ENCODE measurements at regions of chr22 and their contacts with region 1.

Region 1: DNA sequence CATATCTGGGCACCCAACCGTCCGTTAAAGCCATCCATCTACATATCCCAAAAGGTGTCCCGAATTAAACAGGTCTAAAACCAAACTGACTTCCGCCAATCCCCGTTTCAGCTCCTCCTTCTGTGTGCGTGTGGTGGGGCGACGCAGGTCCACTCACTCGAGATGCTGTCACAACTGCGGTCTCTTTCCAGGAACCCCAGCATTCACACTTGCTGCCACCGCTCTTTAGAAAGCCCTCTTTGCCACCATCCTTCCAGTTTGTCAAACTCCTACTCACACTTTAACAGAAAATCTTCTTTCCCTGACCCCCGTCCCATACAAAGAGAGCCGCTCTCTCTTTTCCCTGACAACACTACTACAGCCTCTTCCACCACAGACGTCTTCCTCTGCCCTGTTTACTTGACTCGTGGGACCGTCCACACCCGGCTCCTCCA is 467 bp downstream of the ESS2 start:
- DNase-seq: no peak
- ATAC-seq: peak in 1 of 2 donors; percentile 8
- H3K4me3 ChIP-seq: peak overlapping the region; percentile 78 to 96 (median 89)
- H3K27ac ChIP-seq: peak overlapping the region; percentile 81 to 86 (median 84)
- H3K4me1 ChIP-seq: peaks cover 8% of the 10 kb centered on the region in 2 donors
- H3K27me3 ChIP-seq: peaks cover 9 to 12% (median 11%) of the 10 kb centered on the region in 3 donors
- CTCF ChIP-seq: no peak
- POLR2A ChIP-seq: no peak

Region 2: DNA sequence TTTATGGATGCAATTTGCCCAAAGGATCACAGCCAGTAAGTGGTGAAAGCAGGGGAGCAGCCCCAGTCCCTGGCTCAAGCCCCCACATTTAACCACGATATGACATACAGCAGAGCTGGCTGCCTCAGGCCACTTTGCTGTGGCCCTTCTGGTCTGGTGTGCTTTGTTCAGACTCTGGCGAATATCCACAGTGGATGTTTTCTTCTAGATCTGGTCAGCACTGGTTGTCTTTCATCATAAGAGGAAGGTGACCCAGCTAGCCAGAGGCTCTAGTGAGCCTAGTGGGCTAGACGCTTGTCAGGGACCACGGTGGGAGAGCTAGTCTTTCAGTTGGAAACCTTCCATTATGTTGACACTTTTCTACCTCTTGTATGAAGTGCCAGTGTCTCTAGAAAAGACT is 64.3 kb before region 1 on chr22:
- in situ Hi-C with region 1: no loop called
- intact Hi-C with region 1: no loop called
- DNase-seq: no peak
- ATAC-seq: no peak
- H3K4me3 ChIP-seq: no peak overlapping the region
- H3K27ac ChIP-seq: no peak overlapping the region
- H3K4me1 ChIP-seq: no peaks in the 10 kb centered on the region
- H3K27me3 ChIP-seq: no peaks in the 10 kb centered on the region
- CTCF ChIP-seq: no peak
- POLR2A ChIP-seq: no peak

Region 3: DNA sequence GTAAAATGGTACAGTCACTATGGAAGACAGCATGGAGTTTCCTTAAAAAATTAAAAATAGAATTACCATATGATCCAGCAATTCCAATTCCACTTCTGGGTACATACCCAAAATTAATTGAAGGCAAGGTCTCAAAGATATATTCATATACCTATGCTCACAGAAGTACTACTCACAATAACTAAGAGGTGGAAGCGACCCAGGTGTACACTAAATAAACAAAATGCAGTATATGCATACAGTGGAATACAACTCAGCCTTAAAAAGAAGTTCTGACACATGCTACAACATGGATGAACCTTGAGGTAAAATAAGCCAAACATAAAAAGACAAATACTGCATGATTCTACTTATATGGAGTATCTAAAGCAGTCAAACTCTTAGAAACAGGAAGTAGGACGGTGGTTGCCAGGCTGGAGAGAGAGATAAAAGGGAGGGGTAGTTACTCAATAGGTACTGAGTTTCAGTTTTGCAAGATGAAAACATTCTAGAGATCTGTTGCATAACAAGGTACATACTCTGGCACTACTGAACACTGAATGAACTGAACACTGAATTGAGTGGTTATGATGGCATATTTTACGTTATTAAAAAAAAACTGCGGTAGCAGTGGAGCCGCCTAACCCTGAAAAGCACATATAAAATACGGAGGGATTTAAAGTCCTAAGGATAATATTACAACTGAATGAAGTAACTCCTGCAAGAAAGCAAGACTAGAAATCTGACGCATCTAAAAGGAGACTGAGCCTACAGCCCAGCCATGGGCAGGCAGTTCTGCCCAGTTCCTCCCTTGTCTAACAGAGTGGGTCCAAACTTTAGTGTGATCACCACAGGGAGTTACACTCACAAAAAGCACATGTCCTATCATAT is 34.6 kb before region 1 on chr22:
- in situ Hi-C with region 1: no loop called
- intact Hi-C with region 1: loop called (anchors 1 kb)
- DNase-seq: peak; percentile 65 to 74
- ATAC-seq: peak; percentile 93 to 95
- H3K4me3 ChIP-seq: peak overlapping the region in 2 of 4 donors; percentile 27 to 29
- H3K27ac ChIP-seq: peak overlapping the region; percentile 78 to 90 (median 82)
- H3K4me1 ChIP-seq: peaks cover 64 to 81% of the 10 kb centered on the region in 2 donors
- H3K27me3 ChIP-seq: no peaks in the 10 kb centered on the region
- CTCF ChIP-seq: no peak
- POLR2A ChIP-seq: no peak

Region 4: GRCh38 chr22:19854778-19855503 is 711.0 kb after region 1 on chr22 and contains the starts of genes GNB1L and RTL10:
- in situ Hi-C with region 1: no loop called
- intact Hi-C with region 1: no loop called
- DNase-seq: peak; percentile 94 to 97
- ATAC-seq: peak; percentile 91
- H3K4me3 ChIP-seq: peak within 1 kb of the TSS; percentile 85 to 98 (median 94)
- H3K27ac ChIP-seq: peak within 1 kb of the TSS; percentile 91 to 98 (median 96)
- H3K4me1 ChIP-seq: peaks cover 20 to 31% of the 10 kb centered on the region in 2 donors
- H3K27me3 ChIP-seq: no peaks in the 10 kb centered on the region
- CTCF ChIP-seq: no peak
- POLR2A ChIP-seq: peak; percentile 96 to 98
- total RNA-seq, gene GNB1L: 4.4 to 9.6 (median 6.7) TPM
- total RNA-seq, gene RTL10: 3.5 to 12.8 (median 5.0) TPM